MCF 10A (cell line): ENCODE measurements at regions of chr17 and their contacts with region 1.

Region 1: DNA sequence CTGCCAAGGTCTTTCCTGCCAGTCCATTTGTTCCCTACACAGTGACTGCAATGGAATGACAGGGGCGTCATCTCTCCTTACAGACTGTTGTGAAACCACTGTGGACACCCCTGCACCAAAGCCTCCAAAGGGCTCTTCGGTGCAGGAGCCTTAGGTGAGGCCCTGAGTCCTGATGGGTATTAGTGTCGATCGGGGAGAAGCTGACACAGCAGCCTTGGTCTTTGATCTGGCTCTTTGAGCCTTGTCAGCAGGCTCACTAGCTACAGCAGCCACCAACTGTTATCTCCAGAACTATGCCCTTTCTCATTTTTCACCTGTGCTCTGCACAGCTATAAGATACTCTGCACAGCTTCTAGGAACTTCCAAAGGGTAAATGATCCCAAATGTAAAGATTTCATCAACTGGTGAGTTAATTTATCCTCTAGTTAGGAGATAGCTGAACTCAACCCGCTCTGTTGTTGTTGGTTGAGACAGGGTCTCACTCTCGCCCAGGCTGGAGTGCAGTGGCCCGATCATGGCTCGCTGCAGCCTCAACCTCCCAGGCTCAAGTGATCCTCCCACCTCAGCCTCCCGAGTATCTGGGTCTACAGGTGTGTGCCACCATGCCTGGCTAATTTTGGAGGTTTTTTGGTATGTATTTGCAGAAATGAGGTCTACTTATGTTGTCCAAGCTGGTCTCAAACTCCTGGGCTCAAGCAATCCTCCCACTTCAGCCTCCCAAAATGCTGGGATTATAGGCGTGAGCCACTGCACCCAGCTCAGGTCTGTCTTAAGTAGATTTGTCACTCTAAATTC is 19.7 kb downstream of the G6PC1 start:
- DNase-seq: no peak
- H3K4me3 Mint-ChIP-seq: no peak overlapping the region
- H3K27ac Mint-ChIP-seq: no peak overlapping the region
- H3K4me1 Mint-ChIP-seq: no peaks in the 10 kb centered on the region
- H3K27me3 Mint-ChIP-seq: peaks cover 17% of the 10 kb centered on the region
- CTCF ChIP-seq: no peak

Region 2: GRCh38 chr17:42895185-42895555 is 25.1 kb before region 1 on chr17:
- CTCF ChIA-PET with region 1: no interaction called
- POLR2A ChIA-PET with region 1: no interaction called
- intact Hi-C with region 1: no loop called
- DNase-seq: peak; percentile 84
- H3K4me3 Mint-ChIP-seq: no peak overlapping the region
- H3K27ac Mint-ChIP-seq: no peak overlapping the region
- H3K4me1 Mint-ChIP-seq: peaks cover 12% of the 10 kb centered on the region
- H3K27me3 Mint-ChIP-seq: no peaks in the 10 kb centered on the region
- CTCF ChIP-seq: no peak

Region 3: DNA sequence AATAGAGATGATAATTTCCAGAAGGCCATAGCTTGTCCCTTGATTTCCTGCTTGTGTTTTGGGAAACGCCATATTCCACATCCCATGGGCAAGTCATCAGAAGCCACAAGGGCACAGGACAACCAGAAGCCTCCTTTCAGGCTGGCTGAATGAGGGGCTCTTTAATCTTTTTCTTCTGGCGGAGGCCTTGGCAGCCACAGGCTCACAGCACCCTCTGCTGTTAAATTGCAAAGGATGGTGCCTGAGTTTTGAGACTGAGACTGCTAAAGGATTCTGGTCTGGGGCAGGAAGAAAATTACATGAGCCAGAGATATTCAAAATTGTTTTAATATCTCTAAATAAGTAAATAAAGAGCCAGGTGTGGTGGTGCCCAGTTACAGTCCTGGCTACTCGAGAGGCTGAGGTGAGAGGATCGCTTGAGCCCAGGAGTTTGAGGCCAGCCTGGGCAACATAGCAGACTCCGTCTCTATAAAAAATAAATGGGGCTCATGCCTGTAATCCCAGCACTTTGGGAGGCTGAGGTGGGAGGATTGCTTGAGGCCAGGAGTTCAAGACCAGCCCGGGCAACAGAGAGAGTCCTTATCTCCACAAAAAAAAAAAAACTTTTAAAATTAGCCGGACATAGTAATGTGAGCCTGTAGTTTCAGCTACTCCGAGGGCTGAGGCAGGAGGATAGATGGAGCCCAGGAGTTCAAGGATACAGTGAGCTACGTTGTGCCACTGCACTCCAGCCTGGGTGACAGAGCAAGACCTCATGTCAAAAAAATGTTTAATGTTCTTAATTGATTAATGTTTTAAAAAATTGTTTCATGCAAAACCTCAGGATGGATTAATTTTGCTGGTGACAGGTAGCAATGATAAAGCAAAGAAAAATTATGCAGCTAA is 17.7 kb after region 1 on chr17:
- CTCF ChIA-PET with region 1: interaction called, 10 read pairs
- POLR2A ChIA-PET with region 1: interaction called, 4 read pairs
- intact Hi-C with region 1: no loop called
- DNase-seq: peak; percentile 60
- H3K4me3 Mint-ChIP-seq: no peak overlapping the region
- H3K27ac Mint-ChIP-seq: no peak overlapping the region
- H3K4me1 Mint-ChIP-seq: no peaks in the 10 kb centered on the region
- H3K27me3 Mint-ChIP-seq: peaks cover 12% of the 10 kb centered on the region
- CTCF ChIP-seq: peak; percentile 49